ENCODE measurements at regions of chr22 and their contacts with region 1.

Region 1: DNA sequence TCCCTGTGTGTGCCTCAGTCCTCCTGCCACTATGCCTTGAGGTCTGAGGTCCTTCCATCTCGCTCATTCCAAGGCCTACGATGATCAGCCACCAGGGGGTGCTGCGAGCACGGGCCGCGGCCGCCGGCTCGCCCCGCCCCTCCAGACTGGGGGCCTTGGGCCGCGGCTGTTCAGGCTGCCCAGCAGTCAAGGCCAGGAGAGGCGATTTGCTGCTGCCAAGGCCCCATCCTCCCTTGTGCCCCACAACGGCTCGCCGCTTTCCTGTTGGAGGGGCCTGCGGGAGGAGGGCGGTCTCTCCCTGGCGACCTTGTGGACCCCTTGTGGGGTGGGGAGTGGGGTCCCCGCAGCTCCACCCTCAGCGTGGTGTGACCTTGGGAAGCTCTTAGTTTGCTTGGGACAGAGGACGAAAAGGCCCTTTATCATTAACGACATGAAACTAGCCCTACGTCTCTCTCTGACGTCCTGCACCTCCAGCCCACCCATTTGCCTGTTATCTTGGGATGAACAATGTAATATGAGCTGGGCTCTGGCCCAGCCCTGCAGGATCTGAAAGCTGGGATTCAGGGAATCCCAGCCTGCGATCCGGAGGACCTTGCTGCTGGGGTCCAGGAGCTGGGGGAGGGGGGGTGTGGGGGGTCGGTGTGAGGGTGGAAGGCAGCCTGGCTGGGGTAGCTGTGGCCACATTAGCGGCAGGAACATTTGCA is 5.3 kb upstream of the GALR3 start:
- DNase-seq: peak; percentile 86

Region 2: GRCh38 chr22:37771702-37772427 is 46.0 kb before region 1 on chr22:
- in situ Hi-C with region 1: loop called (anchors 5 kb)
- DNase-seq: no peak

Region 3: GRCh38 chr22:37849089-37849751 is 31.4 kb after region 1 on chr22 and contains the start of gene EIF3L:
- in situ Hi-C with region 1: no loop called
- DNase-seq: peak; percentile 93
- total RNA-seq, gene EIF3L: 595 and 685 TPM in 2 replicates